ENCODE measurements at regions of chr3 and their contacts with region 1.

Region 1: GRCh38 chr3:32138545-32139104 is 32.2 kb downstream of the GPD1L start:
- ATAC-seq: peak in 1 of 8 experiments; percentile 34
- H3K4me3 ChIP-seq: no peak overlapping the region
- H3K27ac ChIP-seq: no peak overlapping the region
- H3K4me1 ChIP-seq: no peaks in the 10 kb centered on the region

Region 2: DNA sequence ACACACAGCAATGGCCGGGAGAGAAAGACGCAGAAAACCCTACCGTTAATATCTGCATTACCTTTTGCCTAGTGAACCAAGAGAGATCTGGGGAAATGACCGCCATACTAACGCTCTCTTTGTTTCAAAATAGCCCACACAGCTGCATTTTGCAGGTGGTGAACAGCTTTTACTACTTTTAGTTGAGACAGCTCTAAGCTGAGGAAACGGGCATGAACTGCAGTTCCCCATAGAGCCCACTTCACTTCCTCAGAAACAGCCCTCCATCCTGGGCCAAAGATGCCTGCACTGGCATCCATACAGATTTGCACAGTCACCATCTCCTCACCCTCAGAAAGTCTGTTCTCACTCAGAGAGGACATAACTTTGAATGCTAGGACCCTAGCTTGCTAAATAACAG is 112.0 kb before region 1 on chr3:
- in situ Hi-C with region 1: loop called in 2 of 9 experiments (anchors 10 to 25 kb)
- ATAC-seq: no peak
- H3K4me3 ChIP-seq: no peak overlapping the region
- H3K27ac ChIP-seq: no peak overlapping the region
- H3K4me1 ChIP-seq: no peaks in the 10 kb centered on the region